Mammary epithelial cell (primary cell): ENCODE measurements at regions of chr1 and their contacts with region 1.

Region 1: GRCh38 chr1:154992721-154993571 is 440 bp upstream of the LENEP start:
- DNase-seq: no peak
- H3K4me3 ChIP-seq: no peak overlapping the region
- H3K27ac ChIP-seq: no peak overlapping the region
- H3K4me1 ChIP-seq: no peaks in the 10 kb centered on the region
- H3K27me3 ChIP-seq: no peaks in the 10 kb centered on the region
- CTCF ChIP-seq: peak; percentile 11 to 17

Region 2: GRCh38 chr1:154955718-154956543 is 37.0 kb before region 1 on chr1 and contains the start of gene PBXIP1:
- CTCF ChIA-PET with region 1: no interaction called
- dilution Hi-C with region 1: loop called (anchors 5 kb)
- in situ Hi-C with region 1: no loop called
- intact Hi-C with region 1: no loop called
- DNase-seq: peak; percentile 85
- H3K4me3 ChIP-seq: peak within 1 kb of the TSS; percentile 56 to 65 (median 59)
- H3K27ac ChIP-seq: peak within 1 kb of the TSS; percentile 69
- H3K4me1 ChIP-seq: peaks cover 20% of the 10 kb centered on the region
- H3K27me3 ChIP-seq: no peaks in the 10 kb centered on the region
- CTCF ChIP-seq: peak in 1 of 2 donors; percentile 41
- total RNA-seq, gene PBXIP1: 17.7 to 52.0 TPM

Region 3: GRCh38 chr1:155063550-155064110 is 70.7 kb after region 1 on chr1 and contains the start of gene EFNA4:
- CTCF ChIA-PET with region 1: no interaction called
- dilution Hi-C with region 1: no loop called
- in situ Hi-C with region 1: no loop called
- intact Hi-C with region 1: no loop called
- DNase-seq: peak; percentile 88
- H3K4me3 ChIP-seq: peak within 1 kb of the TSS; percentile 63 to 88 (median 78)
- H3K27ac ChIP-seq: peak within 1 kb of the TSS; percentile 37
- H3K4me1 ChIP-seq: peaks cover 23% of the 10 kb centered on the region
- H3K27me3 ChIP-seq: no peaks in the 10 kb centered on the region
- CTCF ChIP-seq: no peak
- total RNA-seq, gene EFNA4: 5.0 to 5.8 TPM

Region 4: GRCh38 chr1:155609515-155610256 is 616.7 kb after region 1 on chr1 and contains the start of gene MSTO1:
- CTCF ChIA-PET with region 1: no interaction called
- dilution Hi-C with region 1: no loop called
- in situ Hi-C with region 1: no loop called
- intact Hi-C with region 1: no loop called
- DNase-seq: peak; percentile 97
- H3K4me3 ChIP-seq: peak within 1 kb of the TSS; percentile 64 to 80 (median 64)
- H3K27ac ChIP-seq: peak within 1 kb of the TSS; percentile 65
- H3K4me1 ChIP-seq: no peaks in the 10 kb centered on the region
- H3K27me3 ChIP-seq: no peaks in the 10 kb centered on the region
- CTCF ChIP-seq: no peak
- total RNA-seq, gene MSTO1: 21.5 to 64.7 TPM